ENCODE measurements at regions of chr6 and their contacts with region 1.

Region 1: GRCh38 chr6:125956506-125957390 is at the start of gene HINT3:
- DNase-seq: peak; percentile 96
- H3K4me3 Mint-ChIP-seq: no peak within 1 kb of the TSS
- H3K27ac Mint-ChIP-seq: peak within 1 kb of the TSS; percentile 72
- H3K4me1 Mint-ChIP-seq: peaks cover 5% of the 10 kb centered on the region
- H3K27me3 Mint-ChIP-seq: no peaks in the 10 kb centered on the region
- total RNA-seq, gene HINT3: 9.4 and 9.6 TPM in 2 replicates

Region 2: GRCh38 chr6:125314019-125314581 is 642.6 kb before region 1 on chr6:
- intact Hi-C with region 1: loop called (anchors 5 kb)
- DNase-seq: peak; percentile 17
- H3K4me3 Mint-ChIP-seq: no peak overlapping the region
- H3K27ac Mint-ChIP-seq: no peak overlapping the region
- H3K4me1 Mint-ChIP-seq: no peaks in the 10 kb centered on the region
- H3K27me3 Mint-ChIP-seq: peaks cover 6% of the 10 kb centered on the region

Region 3: GRCh38 chr6:125779924-125780539 is 176.7 kb before region 1 on chr6:
- intact Hi-C with region 1: loop called (anchors 1 kb)
- DNase-seq: peak; percentile 68
- H3K4me3 Mint-ChIP-seq: no peak overlapping the region
- H3K27ac Mint-ChIP-seq: no peak overlapping the region
- H3K4me1 Mint-ChIP-seq: peaks cover 12% of the 10 kb centered on the region
- H3K27me3 Mint-ChIP-seq: peaks cover 15% of the 10 kb centered on the region

Region 4: GRCh38 chr6:125888989-125889656 is 67.6 kb before region 1 on chr6:
- intact Hi-C with region 1: loop called (anchors 1 kb)
- DNase-seq: peak; percentile 8
- H3K4me3 Mint-ChIP-seq: no peak overlapping the region
- H3K27ac Mint-ChIP-seq: no peak overlapping the region
- H3K4me1 Mint-ChIP-seq: no peaks in the 10 kb centered on the region
- H3K27me3 Mint-ChIP-seq: no peaks in the 10 kb centered on the region

Region 5: GRCh38 chr6:125910527-125910926 is 46.2 kb before region 1 on chr6:
- intact Hi-C with region 1: loop called (anchors 1 kb)
- DNase-seq: no peak
- H3K4me3 Mint-ChIP-seq: peak overlapping the region; percentile 40
- H3K27ac Mint-ChIP-seq: peak overlapping the region; percentile 74
- H3K4me1 Mint-ChIP-seq: peaks cover 47% of the 10 kb centered on the region
- H3K27me3 Mint-ChIP-seq: no peaks in the 10 kb centered on the region

Region 6: GRCh38 chr6:125974214-125974866 is 17.6 kb after region 1 on chr6:
- intact Hi-C with region 1: loop called (anchors 1 kb)
- DNase-seq: no peak
- H3K4me3 Mint-ChIP-seq: no peak overlapping the region
- H3K27ac Mint-ChIP-seq: peak overlapping the region; percentile 10
- H3K4me1 Mint-ChIP-seq: peaks cover 6% of the 10 kb centered on the region
- H3K27me3 Mint-ChIP-seq: no peaks in the 10 kb centered on the region